GM13976 (cell line): ENCODE measurements at regions of chr4 and their contacts with region 1.

Region 1: GRCh38 chr4:38078590-38079421 is 118.6 kb downstream of the PTTG2 start:
- DNase-seq: no peak
- CTCF ChIP-seq: no peak

Region 2: GRCh38 chr4:38132107-38132673 is 53.4 kb after region 1 on chr4:
- in situ Hi-C with region 1: loop called (anchors 5 kb)
- DNase-seq: peak; percentile 76
- CTCF ChIP-seq: no peak

Region 3: DNA sequence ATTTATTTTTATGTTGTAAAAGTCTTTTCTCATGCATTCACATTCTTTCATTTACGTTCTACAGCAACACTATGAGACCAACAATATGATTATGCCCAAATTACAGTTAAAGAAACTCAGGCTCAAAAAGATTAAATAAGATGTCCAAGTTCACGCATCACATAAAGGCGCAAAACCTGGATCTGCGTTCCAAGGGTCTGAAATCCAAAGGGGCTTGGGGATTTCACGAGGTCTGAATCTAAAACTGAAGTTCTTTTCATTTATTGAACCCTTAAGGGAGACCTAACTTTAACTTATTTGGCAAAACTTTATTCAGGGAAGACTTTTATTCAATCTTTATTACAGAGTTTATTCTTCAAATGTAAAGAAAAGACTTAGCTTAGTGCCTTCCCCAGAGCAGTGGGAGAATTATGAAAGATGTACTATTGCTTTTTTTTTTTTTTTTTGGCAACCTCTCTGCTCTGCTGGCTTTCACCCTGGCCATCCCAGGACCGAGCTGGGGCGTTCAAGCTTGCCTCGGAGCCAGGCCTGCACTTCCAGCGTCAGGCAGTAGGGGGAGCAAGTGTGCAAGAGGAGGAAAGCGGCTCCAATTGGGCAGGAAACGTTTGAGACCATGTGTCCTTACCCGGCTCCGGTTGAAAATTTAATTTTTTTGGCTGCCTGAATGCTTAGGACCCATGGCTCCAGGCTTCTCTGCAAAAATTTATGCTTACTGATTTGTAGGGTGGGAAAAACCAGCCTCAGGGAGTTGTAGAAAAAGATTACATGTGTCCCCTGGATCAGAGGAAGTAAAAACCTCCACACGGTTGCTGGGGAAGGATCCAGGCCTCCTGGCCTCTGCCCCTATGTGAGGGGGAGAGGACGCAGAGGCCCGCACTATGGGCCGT is 240.9 kb after region 1 on chr4:
- in situ Hi-C with region 1: loop called (anchors 10 kb)
- DNase-seq: peak; percentile 84
- CTCF ChIP-seq: peak; percentile 99

Region 4: DNA sequence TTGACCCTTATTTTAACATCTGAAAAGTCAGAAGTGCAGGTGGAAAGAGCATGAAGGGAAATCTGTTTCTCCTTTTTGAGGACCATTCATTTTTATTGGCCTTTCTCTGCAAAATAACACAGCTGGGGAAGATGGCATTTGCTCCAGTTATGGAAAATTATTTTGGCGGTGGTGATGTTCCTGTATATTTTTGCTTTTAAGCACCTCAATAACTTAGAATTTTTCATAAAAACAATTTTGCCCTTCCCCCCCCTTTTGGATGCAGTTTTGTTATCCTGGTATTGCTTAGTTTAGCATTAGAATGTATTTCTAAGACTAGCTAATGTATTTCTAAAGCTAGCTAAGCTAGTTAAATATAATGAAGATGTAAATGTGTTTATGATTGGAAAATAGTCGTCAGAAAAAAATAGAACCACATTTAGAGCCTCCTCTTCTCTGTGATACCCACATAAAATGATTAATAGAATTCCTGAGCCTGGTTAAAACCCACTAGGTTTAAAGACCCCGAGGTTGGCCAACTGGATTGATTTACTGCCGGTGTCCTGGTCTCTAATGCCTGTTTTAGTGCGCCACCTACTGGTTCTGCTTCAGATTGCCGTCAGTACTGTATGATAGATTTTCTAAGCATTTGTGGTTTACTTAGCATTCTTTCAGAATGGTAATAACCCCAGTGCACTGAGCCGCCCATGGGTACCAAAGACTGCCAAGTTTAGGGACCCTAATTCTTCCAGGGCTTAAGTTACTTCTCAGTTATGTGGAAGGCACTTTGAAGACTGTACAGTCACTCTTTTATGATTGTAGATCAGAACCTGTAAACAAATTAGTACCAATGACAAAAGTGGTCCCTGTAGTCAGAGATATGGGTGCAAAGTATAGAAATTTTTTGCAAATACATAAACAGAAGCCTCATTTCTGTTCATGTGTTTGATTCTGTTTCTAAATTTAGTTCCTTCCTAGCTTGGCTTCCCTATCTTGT is 596.6 kb after region 1 on chr4:
- in situ Hi-C with region 1: loop called (anchors 10 kb)
- DNase-seq: peak; percentile 70
- CTCF ChIP-seq: peak; percentile 77